Right cardiac atrium (tissue), 5 donors: ENCODE measurements at regions of chr3 and their contacts with region 1.

Region 1: DNA sequence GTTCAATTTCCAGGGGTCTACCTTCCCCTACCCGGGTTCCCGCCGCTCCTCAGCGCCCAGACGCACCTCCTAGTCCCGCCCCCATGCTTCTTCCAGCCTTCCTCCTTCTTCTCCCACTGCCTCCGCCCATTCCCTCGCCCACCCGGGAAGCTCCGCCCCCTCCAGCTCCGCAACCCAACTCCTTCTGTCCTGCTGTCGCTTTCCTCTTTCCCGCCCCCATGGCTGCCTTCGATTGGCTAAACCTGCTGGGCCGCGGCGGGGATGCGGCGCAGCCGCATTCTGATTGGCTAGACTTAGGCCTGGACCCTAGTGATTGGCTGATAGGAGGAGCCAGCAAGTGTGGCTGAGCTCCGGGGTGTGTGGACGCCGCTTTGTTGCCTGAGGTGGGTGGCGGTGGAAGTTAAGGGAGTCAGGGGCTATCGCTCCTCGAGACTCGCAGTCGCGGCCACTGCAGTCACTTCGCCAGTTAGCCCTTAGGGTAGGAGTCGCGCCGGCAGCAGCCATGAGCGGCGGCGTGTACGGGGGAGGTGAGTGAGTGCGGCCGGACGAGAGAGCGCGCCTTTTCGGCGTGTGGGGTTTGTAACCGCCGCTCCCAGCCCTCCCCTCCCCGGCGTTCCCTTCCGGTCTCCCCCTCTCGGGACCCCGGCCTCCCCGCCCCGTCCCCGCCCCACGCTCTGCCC is at the start of gene ACTL6A:
- DNase-seq: peak; percentile 100
- ATAC-seq: peak; percentile 99
- H3K4me3 ChIP-seq: peak within 1 kb of the TSS; percentile 85
- H3K27ac ChIP-seq: peak within 1 kb of the TSS; percentile 77
- H3K4me1 ChIP-seq: no peaks in the 10 kb centered on the region
- H3K27me3 ChIP-seq: no peaks in the 10 kb centered on the region
- total RNA-seq, gene ACTL6A: 16.1 to 25.0 (median 19.7) TPM

Region 2: GRCh38 chr3:179181021-179181472 is 381.7 kb before region 1 on chr3:
- intact Hi-C with region 1: no loop called
- DNase-seq: no peak
- ATAC-seq: peak; percentile 84 to 93
- H3K4me3 ChIP-seq: no peak overlapping the region
- H3K27ac ChIP-seq: no peak overlapping the region
- H3K4me1 ChIP-seq: peaks cover 7% of the 10 kb centered on the region
- H3K27me3 ChIP-seq: no peaks in the 10 kb centered on the region

Region 3: GRCh38 chr3:179347345-179348194 is 215.2 kb before region 1 on chr3 and contains the start of gene MFN1:
- intact Hi-C with region 1: loop called in 1 of 4 experiments (anchors 10 kb)
- DNase-seq: peak; percentile 96 to 98 (median 97)
- ATAC-seq: peak; percentile 99
- H3K4me3 ChIP-seq: peak within 1 kb of the TSS; percentile 79
- H3K27ac ChIP-seq: peak within 1 kb of the TSS; percentile 96
- H3K4me1 ChIP-seq: no peaks in the 10 kb centered on the region
- H3K27me3 ChIP-seq: no peaks in the 10 kb centered on the region
- total RNA-seq, gene MFN1: 65.1 to 95.5 (median 74.9) TPM

Region 4: DNA sequence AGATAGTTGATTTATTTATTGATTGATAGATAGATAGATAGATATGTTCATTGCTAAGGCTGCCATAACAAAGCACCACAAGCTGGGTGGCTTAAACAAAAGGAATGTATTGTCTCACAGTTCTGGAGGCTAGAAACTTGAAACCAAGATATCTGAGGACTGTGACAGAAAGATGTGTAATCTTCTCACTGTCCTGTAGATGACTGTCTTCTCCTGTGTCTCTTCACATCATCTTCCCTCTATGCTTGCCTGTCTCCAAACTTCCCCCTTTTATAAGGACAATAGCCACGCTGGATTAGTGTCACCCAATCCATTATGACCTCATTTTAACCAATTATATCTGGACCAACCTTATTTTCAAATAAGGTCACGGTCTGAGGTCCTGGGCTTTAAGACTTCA is 152.4 kb before region 1 on chr3:
- intact Hi-C with region 1: no loop called
- DNase-seq: no peak
- ATAC-seq: no peak
- H3K4me3 ChIP-seq: no peak overlapping the region
- H3K27ac ChIP-seq: no peak overlapping the region
- H3K4me1 ChIP-seq: peaks cover 3% of the 10 kb centered on the region
- H3K27me3 ChIP-seq: no peaks in the 10 kb centered on the region

Region 5: DNA sequence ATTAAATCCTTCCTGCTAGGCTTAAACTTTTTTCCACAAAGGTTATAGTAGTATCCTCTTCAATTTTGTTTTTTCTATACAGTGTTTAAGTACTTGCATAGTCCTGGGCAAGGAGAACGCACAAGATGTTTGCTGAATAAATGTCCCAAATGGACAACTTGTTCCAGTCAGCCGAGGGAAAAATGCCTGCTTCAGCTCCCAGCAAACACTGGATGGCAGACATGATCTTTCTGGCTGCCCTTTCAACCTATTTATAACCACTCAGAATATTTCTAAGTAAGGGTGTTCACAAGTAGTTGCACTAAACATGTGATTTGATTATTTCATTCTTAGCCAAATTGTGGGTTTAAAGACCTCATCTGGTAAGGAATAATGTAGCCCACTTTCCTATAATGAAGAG is 141.2 kb before region 1 on chr3:
- intact Hi-C with region 1: loop called in 3 of 4 experiments (anchors 5 kb)
- DNase-seq: no peak
- ATAC-seq: peak; percentile 76
- H3K4me3 ChIP-seq: no peak overlapping the region
- H3K27ac ChIP-seq: no peak overlapping the region
- H3K4me1 ChIP-seq: no peaks in the 10 kb centered on the region
- H3K27me3 ChIP-seq: no peaks in the 10 kb centered on the region

Region 6: DNA sequence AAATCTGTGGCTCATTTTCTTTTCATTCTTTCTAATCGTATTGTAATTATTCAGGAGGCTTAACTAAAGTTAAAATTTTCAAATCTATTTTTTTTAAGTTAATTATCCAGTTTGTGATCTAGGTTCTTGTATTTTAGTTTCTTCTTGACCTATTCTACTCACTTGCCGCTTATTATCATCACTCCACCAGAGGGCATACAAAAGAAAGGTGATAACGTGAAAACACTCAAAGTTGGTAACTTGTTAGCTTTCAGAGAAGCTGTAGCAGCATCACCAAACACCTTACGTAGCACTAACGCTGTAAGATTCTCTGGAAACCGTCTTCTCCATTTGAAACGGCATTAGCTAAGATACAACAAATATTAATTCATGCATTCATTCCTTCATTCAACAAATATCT is 116.2 kb before region 1 on chr3:
- intact Hi-C with region 1: loop called in 1 of 4 experiments (anchors 10 kb)
- DNase-seq: no peak
- ATAC-seq: no peak
- H3K4me3 ChIP-seq: no peak overlapping the region
- H3K27ac ChIP-seq: no peak overlapping the region
- H3K4me1 ChIP-seq: peaks cover 9% of the 10 kb centered on the region
- H3K27me3 ChIP-seq: no peaks in the 10 kb centered on the region